MCF 10A (cell line): ENCODE measurements at regions of chr12 and their contacts with region 1.

Region 1: GRCh38 chr12:54251667-54252284 is 28.1 kb downstream of the CBX5 start:
- DNase-seq: peak; percentile 58
- H3K4me3 Mint-ChIP-seq: no peak overlapping the region
- H3K27ac Mint-ChIP-seq: peak overlapping the region; percentile 69
- H3K4me1 Mint-ChIP-seq: no peaks in the 10 kb centered on the region
- H3K27me3 Mint-ChIP-seq: no peaks in the 10 kb centered on the region
- CTCF ChIP-seq: peak; percentile 68

Region 2: DNA sequence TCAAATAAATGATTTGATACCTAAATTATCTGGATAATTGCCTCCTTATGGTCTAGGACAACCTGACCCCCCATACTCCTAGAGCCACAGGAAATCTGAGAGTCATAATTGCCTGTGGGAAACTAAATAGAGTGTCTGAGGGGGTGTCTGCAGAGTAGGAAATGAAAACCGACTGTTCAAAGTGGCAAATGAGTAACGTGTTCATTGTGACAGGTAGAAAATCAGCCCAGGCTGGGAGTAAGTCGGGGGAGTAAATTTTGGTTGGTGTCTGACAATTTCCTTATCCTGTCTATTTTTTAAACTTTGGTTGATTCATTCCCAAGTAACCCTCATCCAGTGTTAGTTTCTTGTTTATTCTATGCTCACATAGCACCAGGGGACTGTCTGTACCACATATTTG is 364.8 kb before region 1 on chr12:
- CTCF ChIA-PET with region 1: no interaction called
- POLR2A ChIA-PET with region 1: no interaction called
- intact Hi-C with region 1: no loop called
- DNase-seq: no peak
- H3K4me3 Mint-ChIP-seq: no peak overlapping the region
- H3K27ac Mint-ChIP-seq: no peak overlapping the region
- H3K4me1 Mint-ChIP-seq: no peaks in the 10 kb centered on the region
- H3K27me3 Mint-ChIP-seq: peaks cover 38% of the 10 kb centered on the region
- CTCF ChIP-seq: no peak

Region 3: DNA sequence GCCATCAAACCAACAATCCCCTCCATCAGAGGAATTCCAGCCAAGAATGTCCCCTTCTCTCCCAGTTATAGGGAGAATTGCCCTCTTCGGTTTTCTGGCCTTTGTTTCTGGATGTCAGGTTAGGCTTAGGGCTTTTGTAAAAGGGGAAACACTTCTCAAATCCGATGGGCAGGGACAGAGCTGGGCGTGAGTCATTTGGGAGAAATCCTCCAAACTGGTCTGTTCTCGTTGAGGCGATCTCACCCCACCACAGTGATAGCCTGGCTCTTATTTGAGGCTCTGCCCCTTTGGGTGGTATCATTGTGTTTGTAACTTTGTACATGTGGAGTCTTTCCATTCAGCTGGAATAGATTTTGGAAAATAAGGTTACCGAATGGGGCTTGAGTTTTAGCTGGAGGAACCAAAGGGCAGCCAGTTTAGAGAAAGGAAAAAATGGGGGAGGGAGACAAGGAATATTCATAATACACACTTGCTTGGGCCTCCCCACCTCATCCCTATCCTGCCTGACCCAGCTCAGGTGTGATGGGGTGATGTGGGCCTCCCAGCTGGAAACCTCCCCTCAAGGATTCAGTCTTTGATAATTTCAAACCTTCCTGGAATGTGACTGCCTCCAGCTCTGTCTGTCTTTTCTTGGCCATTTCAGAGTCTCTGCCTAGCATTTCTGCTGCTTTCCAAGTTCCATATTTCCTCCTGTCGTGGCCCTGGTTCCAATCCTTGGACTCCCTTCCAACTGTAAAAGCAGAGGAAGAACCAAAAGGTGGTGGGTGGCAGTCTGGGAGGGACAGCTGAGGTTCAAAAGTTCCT is 190.6 kb before region 1 on chr12:
- CTCF ChIA-PET with region 1: no interaction called
- POLR2A ChIA-PET with region 1: no interaction called
- intact Hi-C with region 1: no loop called
- DNase-seq: no peak
- H3K4me3 Mint-ChIP-seq: no peak overlapping the region
- H3K27ac Mint-ChIP-seq: no peak overlapping the region
- H3K4me1 Mint-ChIP-seq: no peaks in the 10 kb centered on the region
- H3K27me3 Mint-ChIP-seq: peaks cover 18% of the 10 kb centered on the region
- CTCF ChIP-seq: no peak

Region 4: DNA sequence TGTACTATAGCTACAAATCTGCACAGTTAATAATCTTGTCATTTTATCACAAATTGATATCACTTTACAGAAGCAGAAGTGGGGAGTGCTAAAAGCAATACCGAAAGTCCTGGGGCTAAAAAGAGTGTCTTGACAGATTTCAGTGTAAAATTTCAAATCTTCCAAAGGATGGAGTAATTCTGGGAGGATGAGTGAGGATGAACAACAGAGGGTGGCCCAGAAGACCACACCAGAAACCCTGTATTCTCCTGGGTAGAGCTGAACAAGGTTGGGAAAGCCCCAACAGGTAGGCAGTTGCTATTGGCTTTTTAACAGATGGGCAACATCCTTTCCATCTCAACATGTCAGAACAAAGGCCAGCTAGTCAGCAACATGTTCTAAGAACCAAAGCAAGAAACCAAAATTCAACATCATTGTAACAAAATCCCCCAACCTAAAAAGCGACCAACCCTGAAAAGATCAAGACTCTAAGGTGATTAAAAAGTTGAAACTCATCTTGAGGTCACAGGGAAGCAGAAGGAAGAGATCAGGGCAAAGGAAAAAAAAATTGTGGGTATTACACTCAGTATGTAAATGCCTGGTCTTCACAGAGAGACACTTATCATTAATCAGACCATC is 10.7 kb before region 1 on chr12:
- CTCF ChIA-PET with region 1: interaction called, 63 read pairs
- POLR2A ChIA-PET with region 1: interaction called, 7 read pairs
- intact Hi-C with region 1: no loop called
- DNase-seq: no peak
- H3K4me3 Mint-ChIP-seq: no peak overlapping the region
- H3K27ac Mint-ChIP-seq: peak overlapping the region; percentile 25
- H3K4me1 Mint-ChIP-seq: no peaks in the 10 kb centered on the region
- H3K27me3 Mint-ChIP-seq: no peaks in the 10 kb centered on the region
- CTCF ChIP-seq: no peak

Region 5: DNA sequence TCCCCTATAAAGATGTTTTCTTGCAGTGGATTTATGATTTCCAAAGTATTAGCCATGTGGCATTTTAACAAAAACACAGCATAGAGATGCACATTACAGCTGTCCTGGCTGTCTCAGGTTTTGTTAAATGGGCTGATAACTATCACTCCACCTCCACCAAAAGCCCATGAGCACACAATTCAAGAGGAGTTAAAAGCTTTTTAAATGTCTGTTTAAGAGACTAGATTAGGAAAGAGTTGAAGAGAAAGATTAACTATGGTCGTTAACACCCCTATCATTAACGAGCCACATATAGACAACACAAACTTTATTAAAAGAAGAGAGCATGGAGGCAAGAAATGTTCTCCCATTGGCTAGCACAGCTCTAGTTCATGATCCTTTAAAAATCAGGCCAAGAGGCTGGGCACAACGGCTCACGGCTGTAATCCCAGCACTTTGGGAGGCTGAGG is 13.6 kb after region 1 on chr12:
- CTCF ChIA-PET with region 1: interaction called, 19 read pairs
- POLR2A ChIA-PET with region 1: interaction called, 4 read pairs
- intact Hi-C with region 1: no loop called
- DNase-seq: no peak
- H3K4me3 Mint-ChIP-seq: no peak overlapping the region
- H3K27ac Mint-ChIP-seq: no peak overlapping the region
- H3K4me1 Mint-ChIP-seq: peaks cover 14% of the 10 kb centered on the region
- H3K27me3 Mint-ChIP-seq: no peaks in the 10 kb centered on the region
- CTCF ChIP-seq: no peak

Region 6: GRCh38 chr12:54489857-54490256 is 238.1 kb after region 1 on chr12:
- CTCF ChIA-PET with region 1: no interaction called
- POLR2A ChIA-PET with region 1: no interaction called
- intact Hi-C with region 1: no loop called
- DNase-seq: no peak
- H3K4me3 Mint-ChIP-seq: no peak overlapping the region
- H3K27ac Mint-ChIP-seq: no peak overlapping the region
- H3K4me1 Mint-ChIP-seq: no peaks in the 10 kb centered on the region
- H3K27me3 Mint-ChIP-seq: peaks cover 17% of the 10 kb centered on the region
- CTCF ChIP-seq: no peak

Region 7: DNA sequence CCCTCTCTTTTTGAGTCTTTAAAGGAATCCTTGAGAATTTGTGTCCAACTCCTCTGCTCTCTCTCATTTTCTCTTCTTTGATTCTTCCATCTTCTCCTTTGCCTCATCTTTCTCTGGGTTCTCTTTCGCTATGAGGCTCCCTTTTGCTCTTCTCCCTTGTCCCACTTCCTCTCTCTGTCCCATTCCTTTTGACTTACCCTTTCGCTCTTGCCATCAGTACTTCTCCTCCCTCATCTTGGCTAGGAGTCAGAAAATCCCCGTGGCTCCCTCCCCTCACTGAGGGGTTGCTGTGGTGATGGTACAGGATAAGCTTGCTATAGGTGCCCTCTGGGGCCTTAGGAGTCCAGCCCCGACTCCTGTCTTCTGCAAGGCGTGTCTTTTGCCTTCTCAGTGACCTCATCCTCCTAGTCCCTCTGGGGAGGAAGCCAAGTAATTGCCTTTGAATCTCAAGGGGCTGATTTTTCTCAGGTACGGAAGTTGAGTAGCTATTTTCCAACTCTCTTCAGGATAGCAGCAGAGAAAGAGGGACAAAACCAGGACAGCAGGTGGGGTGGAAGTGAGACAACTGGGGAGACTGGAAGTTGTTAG is 304.0 kb after region 1 on chr12:
- CTCF ChIA-PET with region 1: no interaction called
- POLR2A ChIA-PET with region 1: no interaction called
- intact Hi-C with region 1: no loop called
- DNase-seq: no peak
- H3K4me3 Mint-ChIP-seq: no peak overlapping the region
- H3K27ac Mint-ChIP-seq: no peak overlapping the region
- H3K4me1 Mint-ChIP-seq: peaks cover 6% of the 10 kb centered on the region
- H3K27me3 Mint-ChIP-seq: peaks cover 16% of the 10 kb centered on the region
- CTCF ChIP-seq: no peak